ENCODE measurements at regions of chr17 and their contacts with region 1.

Region 1: DNA sequence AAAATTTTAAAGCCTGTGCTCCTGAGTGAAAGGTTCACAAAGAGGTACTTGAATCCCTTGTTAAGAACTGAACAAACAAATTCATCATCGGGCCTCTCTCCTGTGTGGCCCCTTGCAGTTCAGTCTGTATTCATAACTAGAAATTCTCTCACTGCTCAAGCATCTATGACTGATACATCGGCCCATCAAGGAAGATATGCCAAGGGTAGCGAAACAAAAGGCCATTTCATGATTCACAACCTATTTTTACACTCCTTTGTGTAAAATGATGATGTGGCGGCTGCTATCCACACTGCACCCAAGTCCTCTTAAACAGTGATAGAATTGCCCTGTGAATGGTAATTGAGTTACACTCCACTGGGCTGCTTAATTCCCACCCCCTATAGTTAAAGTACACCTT is 204.6 kb downstream of the STX8 start:
- DNase-seq: peak; percentile 94
- H3K4me3 ChIP-seq: no peak overlapping the region
- H3K27ac ChIP-seq: peak overlapping the region; percentile 60
- H3K4me1 ChIP-seq: peaks cover 12% of the 10 kb centered on the region
- H3K27me3 ChIP-seq: no peaks in the 10 kb centered on the region
- CTCF ChIP-seq: no peak

Region 2: DNA sequence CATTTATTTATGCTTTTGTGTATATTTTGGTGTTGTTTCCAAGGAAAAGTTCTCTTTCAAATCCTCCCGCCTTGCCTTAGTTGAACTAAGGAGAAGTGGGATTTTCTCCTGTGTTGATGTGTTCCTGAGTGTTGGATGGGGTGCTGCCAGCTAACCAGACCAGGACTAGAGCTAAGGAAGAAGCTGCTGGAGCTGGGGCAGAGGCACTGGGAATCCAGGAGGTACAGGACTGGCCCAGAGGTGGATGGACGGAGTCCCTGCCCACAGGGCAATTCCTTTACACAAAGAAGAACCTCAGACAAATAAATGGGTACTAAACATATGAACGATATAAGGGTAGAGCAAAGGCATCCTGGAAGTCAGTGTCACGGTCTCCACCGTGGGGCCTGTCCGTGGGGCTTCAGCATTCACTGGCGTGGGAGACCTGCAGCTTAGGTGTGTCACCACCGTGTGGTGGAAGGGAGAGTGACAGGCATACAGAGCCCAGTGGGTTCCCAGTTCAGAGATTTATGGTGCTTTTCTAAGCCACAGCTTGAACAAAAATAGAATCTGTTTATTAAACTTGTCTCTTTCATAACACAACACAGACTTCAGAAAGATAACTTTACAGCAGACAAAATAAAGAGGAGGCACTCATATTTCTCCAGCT is 79.0 kb before region 1 on chr17:
- CTCF ChIA-PET with region 1: no interaction called
- dilution Hi-C with region 1: no loop called
- in situ Hi-C with region 1: no loop called
- intact Hi-C with region 1: no loop called
- DNase-seq: no peak
- H3K4me3 ChIP-seq: no peak overlapping the region
- H3K27ac ChIP-seq: no peak overlapping the region
- H3K4me1 ChIP-seq: peaks cover 9% of the 10 kb centered on the region
- H3K27me3 ChIP-seq: no peaks in the 10 kb centered on the region
- CTCF ChIP-seq: peak; percentile 49 to 69

Region 3: GRCh38 chr17:9330612-9331271 is 40.3 kb before region 1 on chr17:
- CTCF ChIA-PET with region 1: no interaction called
- dilution Hi-C with region 1: loop called (anchors 5 kb)
- in situ Hi-C with region 1: no loop called
- intact Hi-C with region 1: no loop called
- DNase-seq: no peak
- H3K4me3 ChIP-seq: no peak overlapping the region
- H3K27ac ChIP-seq: no peak overlapping the region
- H3K4me1 ChIP-seq: no peaks in the 10 kb centered on the region
- H3K27me3 ChIP-seq: no peaks in the 10 kb centered on the region
- CTCF ChIP-seq: no peak

Region 4: DNA sequence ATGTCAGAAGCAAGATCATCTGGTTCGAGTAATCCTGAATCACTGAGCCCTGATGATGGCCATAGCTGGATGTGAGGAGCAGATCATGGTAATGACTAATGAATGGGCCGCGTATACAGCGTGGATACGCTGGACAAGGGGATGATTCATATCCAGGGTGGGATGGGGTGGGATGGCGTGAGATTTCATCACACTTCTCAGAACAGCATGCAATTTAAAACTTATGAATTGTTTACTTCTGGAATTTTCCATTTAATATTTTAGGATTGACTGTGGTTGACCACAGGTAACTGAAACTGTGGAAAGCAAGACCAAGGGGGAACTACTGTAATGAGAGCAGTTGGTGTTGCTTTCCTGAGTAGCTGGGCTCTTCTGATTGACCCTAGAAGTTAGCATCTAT is 20.9 kb before region 1 on chr17:
- CTCF ChIA-PET with region 1: no interaction called
- dilution Hi-C with region 1: no loop called
- in situ Hi-C with region 1: no loop called
- intact Hi-C with region 1: no loop called
- DNase-seq: peak; percentile 91
- H3K4me3 ChIP-seq: no peak overlapping the region
- H3K27ac ChIP-seq: no peak overlapping the region
- H3K4me1 ChIP-seq: no peaks in the 10 kb centered on the region
- H3K27me3 ChIP-seq: no peaks in the 10 kb centered on the region
- CTCF ChIP-seq: no peak

Region 5: DNA sequence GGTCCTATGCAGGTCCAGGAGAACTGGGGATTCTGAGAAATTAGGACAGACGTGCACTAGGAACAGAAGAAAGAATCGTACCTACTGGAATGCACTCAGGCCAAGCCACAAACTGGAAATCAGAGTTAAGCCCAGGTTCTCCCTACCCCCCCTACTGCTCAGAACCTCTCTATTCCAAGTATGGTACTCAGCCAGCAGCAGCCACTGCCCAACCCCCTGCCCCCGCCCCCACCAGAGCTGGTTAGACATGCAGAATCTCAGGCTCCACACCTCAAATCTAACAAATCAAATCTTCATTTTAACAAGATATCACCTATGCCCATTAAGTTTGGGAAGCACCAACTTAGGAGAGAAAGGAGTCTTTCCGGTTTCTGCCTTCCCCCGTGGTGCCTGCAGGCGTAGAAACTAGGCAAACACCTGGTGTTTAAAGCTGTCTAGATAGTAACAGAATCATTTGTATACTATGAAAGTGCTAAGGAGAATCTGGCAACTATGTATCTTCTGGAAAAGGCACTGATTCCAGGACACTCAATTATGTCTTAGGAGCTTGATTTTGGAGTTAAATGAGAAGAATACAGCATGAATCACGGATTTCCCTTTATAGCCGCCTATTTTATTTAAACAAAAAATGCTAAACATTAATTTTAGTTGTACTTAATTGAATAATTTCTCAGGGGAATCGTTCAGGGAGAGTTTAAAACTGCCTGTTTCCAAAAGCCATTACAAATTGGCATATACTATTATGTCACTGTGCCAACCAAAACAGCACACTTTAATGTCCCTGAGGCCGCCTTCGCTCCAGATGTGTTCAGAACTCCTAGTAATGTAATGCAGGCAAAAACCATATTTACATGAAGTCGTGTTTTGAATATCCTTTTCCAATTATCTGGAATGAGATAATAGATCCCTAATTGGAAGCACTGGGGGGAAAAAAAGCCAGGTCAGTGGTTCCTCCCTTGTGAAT is 38.1 kb after region 1 on chr17:
- CTCF ChIA-PET with region 1: no interaction called
- dilution Hi-C with region 1: no loop called
- in situ Hi-C with region 1: no loop called
- intact Hi-C with region 1: no loop called
- DNase-seq: peak; percentile 62
- H3K4me3 ChIP-seq: no peak overlapping the region
- H3K27ac ChIP-seq: peak overlapping the region; percentile 38
- H3K4me1 ChIP-seq: peaks cover 11% of the 10 kb centered on the region
- H3K27me3 ChIP-seq: no peaks in the 10 kb centered on the region
- CTCF ChIP-seq: no peak

Region 6: GRCh38 chr17:9419932-9420453 is 49.0 kb after region 1 on chr17:
- CTCF ChIA-PET with region 1: no interaction called
- dilution Hi-C with region 1: loop called (anchors 5 kb)
- in situ Hi-C with region 1: no loop called
- intact Hi-C with region 1: no loop called
- DNase-seq: no peak
- H3K4me3 ChIP-seq: no peak overlapping the region
- H3K27ac ChIP-seq: no peak overlapping the region
- H3K4me1 ChIP-seq: no peaks in the 10 kb centered on the region
- H3K27me3 ChIP-seq: no peaks in the 10 kb centered on the region
- CTCF ChIP-seq: no peak

Measured in mammary epithelial cell (primary cell).